ENCODE measurements at regions of chr17 and their contacts with region 1.

Region 1: DNA sequence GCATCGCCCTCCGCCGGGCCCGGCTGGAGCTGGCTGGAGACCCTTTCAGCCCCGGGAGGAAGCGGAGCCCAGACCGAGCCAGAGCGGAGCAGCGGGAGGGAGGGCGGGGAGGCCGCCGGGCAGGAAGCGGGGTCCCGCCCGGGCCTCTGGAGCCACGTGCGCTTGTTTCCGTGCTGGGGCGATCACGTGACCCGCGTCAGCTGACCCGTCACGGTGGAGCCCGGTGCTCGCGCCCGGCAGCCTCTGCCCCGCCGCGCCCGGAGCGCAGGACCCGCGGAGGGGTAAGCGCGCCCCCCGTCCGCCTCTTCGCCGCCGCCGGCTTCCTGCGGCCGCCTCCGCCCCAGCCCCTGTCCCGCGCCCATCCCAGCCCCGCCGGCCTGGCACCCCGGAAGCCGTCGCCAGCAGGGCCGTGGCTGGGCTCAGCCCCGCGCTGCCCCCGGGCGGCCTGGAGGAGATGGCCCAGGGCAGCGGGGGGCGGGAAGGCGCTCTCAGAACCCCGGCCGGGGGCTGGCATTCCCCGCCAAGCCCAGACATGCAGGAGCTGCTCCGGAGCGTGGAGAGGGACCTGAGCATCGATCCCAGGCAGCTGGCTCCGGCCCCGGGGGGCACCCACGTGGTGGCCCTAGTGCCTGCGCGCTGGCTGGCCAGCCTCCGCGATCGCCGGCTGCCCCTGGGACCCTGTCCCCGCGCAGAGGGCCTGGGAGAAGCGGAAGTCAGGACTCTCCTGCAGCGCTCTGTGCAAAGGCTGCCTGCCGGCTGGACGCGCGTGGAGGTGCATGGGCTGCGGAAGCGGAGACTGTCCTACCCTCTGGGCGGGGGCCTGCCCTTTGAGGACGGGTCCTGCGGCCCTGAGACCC is at the start of gene WDR81:
- DNase-seq: peak; percentile 91
- H3K4me3 Mint-ChIP-seq: peak within 1 kb of the TSS; percentile 69
- H3K27ac Mint-ChIP-seq: peak within 1 kb of the TSS; percentile 41
- H3K4me1 Mint-ChIP-seq: peaks cover 29% of the 10 kb centered on the region
- H3K27me3 Mint-ChIP-seq: no peaks in the 10 kb centered on the region
- total RNA-seq, gene WDR81: 2.9 to 3.7 TPM

Region 2: GRCh38 chr17:1783834-1784611 is 59.3 kb after region 1 on chr17:
- CTCF ChIA-PET with region 1: interaction called, 13 read pairs
- intact Hi-C with region 1: loop called (anchors 5 kb)
- DNase-seq: no peak
- H3K4me3 Mint-ChIP-seq: no peak overlapping the region
- H3K27ac Mint-ChIP-seq: peak overlapping the region; percentile 58
- H3K4me1 Mint-ChIP-seq: no peaks in the 10 kb centered on the region
- H3K27me3 Mint-ChIP-seq: no peaks in the 10 kb centered on the region

Region 3: GRCh38 chr17:1865252-1866037 is 140.7 kb after region 1 on chr17:
- CTCF ChIA-PET with region 1: interaction called, 25 read pairs
- intact Hi-C with region 1: no loop called
- DNase-seq: peak; percentile 68
- H3K4me3 Mint-ChIP-seq: no peak overlapping the region
- H3K27ac Mint-ChIP-seq: no peak overlapping the region
- H3K4me1 Mint-ChIP-seq: peaks cover 15% of the 10 kb centered on the region
- H3K27me3 Mint-ChIP-seq: no peaks in the 10 kb centered on the region

Region 4: DNA sequence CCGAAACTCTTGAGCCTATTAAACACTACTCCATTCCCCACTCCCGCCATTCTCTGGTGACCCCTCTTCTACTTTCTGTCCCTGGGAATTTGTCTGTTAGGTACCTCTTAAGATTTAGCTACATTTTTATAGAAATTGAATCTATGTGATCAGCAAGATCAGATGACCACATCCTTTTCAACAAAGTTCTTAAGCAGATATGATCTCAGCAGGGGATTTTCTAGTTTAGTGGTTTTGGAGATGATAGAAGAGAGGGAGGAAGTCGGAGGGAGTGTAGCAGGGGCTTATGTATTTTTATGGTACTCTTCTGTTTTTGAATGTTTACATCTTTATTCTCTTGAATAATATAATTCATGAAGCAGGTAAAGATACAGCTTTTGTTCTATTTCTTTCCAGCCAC is 145.9 kb after region 1 on chr17:
- CTCF ChIA-PET with region 1: interaction called, 25 read pairs
- intact Hi-C with region 1: no loop called
- DNase-seq: no peak
- H3K4me3 Mint-ChIP-seq: no peak overlapping the region
- H3K27ac Mint-ChIP-seq: peak overlapping the region; percentile 70
- H3K4me1 Mint-ChIP-seq: peaks cover 50% of the 10 kb centered on the region
- H3K27me3 Mint-ChIP-seq: no peaks in the 10 kb centered on the region

Region 5: DNA sequence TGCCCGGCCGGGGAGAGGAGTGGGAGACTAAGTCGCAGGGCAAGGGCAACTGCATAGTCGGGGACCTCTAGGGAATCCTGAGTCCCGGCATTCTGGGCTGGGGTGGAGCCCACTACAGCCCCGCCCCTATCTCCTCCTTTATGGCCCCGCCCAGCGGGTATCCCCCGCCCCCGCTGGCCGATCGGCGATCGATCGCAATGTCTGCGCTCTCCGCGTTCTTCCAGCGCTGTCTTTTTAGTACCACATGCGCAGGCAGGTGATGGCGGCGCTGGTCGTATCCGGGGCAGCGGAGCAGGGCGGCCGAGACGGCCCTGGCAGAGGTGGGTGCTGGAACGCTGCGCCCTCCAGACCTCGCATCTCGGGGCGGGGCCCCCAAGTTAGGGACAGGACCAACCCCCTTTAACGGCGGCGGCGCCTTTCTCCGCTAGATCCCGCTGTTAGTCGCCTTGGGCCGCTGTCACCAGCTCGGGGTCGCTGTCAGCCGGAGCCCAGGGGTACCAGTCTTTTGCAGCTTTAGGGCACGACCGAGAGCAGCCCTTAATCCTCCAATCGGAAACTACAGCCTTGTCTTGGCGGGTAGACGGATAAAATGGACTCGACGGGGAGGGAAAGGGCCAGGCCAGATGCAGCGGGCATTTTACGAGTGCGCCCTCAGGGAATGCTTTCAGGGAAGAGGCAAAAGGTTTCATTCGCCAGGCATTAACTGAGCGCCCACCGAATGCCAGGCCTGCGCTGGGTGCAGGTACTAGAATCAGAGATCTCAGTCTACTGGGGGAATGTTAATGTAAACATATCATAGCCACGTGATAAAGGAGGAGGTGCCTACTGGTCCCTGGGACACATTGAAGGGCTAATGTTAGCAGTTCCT is 305.4 kb after region 1 on chr17 and contains the start of gene DPH1:
- CTCF ChIA-PET with region 1: interaction called, 11 read pairs
- intact Hi-C with region 1: no loop called
- DNase-seq: peak; percentile 91
- H3K4me3 Mint-ChIP-seq: peak within 1 kb of the TSS; percentile 94
- H3K27ac Mint-ChIP-seq: peak within 1 kb of the TSS; percentile 61
- H3K4me1 Mint-ChIP-seq: peaks cover 29% of the 10 kb centered on the region
- H3K27me3 Mint-ChIP-seq: peaks cover 24% of the 10 kb centered on the region
- total RNA-seq, gene DPH1: 31.1 to 34.1 TPM